ENCODE measurements at regions of chr4 and their contacts with region 1.

Region 1: DNA sequence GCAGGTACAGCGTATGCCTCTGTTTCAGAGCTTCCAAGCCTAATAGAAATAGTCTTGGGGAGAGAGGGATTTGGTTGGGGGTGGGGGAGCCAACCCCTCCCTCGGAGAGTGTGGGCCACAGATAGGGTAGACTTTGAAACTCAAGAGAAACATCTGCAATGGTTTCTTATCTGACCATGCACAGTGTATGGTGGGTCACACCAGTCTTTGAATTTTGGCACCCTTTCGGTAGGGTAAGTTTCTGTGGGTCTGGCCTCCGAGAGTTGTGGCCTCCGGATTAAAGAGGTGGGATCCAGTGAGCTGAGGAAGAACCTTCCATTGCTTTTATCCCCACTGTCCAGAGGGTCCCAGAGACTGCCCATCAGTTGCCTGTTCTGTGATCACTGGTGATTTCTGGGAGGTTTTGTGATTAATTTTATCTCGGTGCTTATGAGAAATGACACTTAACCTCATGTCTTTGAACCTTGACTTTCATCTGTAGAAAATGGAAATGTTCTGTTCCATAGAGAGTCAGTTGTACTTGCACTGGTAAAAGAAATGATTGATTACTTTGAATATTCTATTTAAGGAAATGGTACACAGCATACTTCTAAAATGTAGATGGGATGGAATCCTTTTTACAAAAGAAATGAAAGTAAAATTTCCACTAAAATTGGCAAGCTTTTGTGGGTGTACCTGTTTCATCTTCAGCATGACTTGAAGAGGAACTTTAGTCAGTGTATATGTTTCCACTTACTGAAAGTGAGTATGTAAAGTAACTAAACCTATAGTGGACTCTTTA is 62.7 kb downstream of the TMEM131L start:
- DNase-seq: no peak
- H3K4me3 Mint-ChIP-seq: peak overlapping the region; percentile 71
- H3K27ac Mint-ChIP-seq: peak overlapping the region; percentile 91
- H3K4me1 Mint-ChIP-seq: peaks cover 74% of the 10 kb centered on the region
- H3K27me3 Mint-ChIP-seq: no peaks in the 10 kb centered on the region

Region 2: DNA sequence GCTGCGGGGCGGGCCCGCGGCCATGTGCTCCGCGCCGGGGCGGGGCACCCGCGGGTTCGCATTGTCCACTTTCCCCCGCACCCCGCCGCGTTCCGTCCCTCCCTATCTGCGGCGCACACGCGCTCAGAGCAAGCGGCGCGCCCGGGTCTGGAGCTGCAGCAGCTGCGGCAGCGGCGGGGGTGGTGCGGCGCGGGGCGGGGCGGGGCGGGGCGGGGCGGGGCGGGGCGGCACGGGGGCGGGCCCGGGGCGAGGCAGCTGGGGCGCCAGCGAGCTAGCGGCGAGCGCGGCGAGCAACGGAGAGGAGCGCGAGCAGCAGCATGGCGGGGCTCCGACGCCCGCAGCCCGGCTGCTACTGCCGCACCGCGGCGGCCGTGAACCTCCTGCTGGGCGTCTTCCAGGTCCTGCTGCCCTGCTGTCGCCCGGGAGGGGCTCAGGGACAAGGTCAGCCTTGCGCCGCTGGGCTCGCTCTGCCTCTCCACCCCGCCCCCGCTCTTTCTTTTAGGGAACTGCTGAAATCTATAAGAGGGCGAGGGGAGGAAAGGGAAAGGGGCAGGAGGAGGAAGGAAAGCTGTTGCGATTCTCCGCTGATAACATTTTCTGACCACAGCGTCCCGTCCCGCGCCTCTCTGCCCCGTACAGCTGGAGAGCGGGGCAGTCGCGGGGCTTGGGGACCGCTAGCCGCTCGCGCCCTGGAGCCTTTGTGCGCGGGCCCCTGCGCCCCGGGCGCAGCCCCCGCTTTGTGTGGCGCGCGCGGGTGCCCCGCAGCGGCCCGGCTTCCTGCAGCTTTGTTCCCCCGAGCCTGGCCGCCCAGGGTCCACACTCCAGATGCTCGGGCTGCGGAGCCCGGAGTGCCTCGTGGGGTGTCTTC is 62.6 kb before region 1 on chr4 and contains the start of gene TMEM131L:
- intact Hi-C with region 1: loop called (anchors 2 kb)
- DNase-seq: peak; percentile 66
- H3K4me3 Mint-ChIP-seq: peak within 1 kb of the TSS; percentile 82
- H3K27ac Mint-ChIP-seq: peak within 1 kb of the TSS; percentile 82
- H3K4me1 Mint-ChIP-seq: peaks cover 53% of the 10 kb centered on the region
- H3K27me3 Mint-ChIP-seq: no peaks in the 10 kb centered on the region
- total RNA-seq, gene TMEM131L: 28.1 and 29.7 TPM in 2 replicates

Region 3: GRCh38 chr4:153549401-153549800 is 20.5 kb after region 1 on chr4:
- intact Hi-C with region 1: loop called (anchors 2 kb)
- DNase-seq: no peak
- H3K4me3 Mint-ChIP-seq: no peak overlapping the region
- H3K27ac Mint-ChIP-seq: peak overlapping the region; percentile 51
- H3K4me1 Mint-ChIP-seq: peaks cover 23% of the 10 kb centered on the region
- H3K27me3 Mint-ChIP-seq: no peaks in the 10 kb centered on the region